ENCODE measurements at regions of chr17 and their contacts with region 1.

Region 1: GRCh38 chr17:60142872-60143499 is 6.8 kb upstream of the CA4 start:
- H3K4me3 ChIP-seq: no peak overlapping the region
- H3K27ac ChIP-seq: no peak overlapping the region
- H3K4me1 ChIP-seq: peaks cover 4% of the 10 kb centered on the region
- CTCF ChIP-seq: peak; percentile 92

Region 2: DNA sequence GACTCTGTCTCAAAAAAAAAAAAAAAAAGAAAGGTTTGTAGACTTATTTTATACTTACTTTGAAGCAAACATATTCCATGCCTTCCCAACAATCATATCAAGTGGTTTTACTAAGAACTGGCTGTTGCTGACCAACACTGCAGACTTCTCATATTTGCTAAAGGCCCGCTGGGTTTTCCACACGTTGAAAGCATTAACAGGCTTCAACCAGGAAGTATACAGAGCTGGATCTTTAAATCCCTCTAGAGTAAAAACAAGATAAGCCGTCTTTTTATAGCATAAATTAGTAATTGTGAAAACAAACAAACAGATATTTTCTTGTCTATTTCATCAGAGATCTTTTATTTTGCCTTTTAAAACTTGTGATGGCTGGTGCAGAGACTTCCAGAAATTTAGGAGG is 279.4 kb before region 1 on chr17:
- CTCF ChIA-PET with region 1: no interaction called
- POLR2A ChIA-PET with region 1: no interaction called
- H3K4me3 ChIP-seq: no peak overlapping the region
- H3K27ac ChIP-seq: no peak overlapping the region
- H3K4me1 ChIP-seq: no peaks in the 10 kb centered on the region
- CTCF ChIP-seq: no peak

Region 3: DNA sequence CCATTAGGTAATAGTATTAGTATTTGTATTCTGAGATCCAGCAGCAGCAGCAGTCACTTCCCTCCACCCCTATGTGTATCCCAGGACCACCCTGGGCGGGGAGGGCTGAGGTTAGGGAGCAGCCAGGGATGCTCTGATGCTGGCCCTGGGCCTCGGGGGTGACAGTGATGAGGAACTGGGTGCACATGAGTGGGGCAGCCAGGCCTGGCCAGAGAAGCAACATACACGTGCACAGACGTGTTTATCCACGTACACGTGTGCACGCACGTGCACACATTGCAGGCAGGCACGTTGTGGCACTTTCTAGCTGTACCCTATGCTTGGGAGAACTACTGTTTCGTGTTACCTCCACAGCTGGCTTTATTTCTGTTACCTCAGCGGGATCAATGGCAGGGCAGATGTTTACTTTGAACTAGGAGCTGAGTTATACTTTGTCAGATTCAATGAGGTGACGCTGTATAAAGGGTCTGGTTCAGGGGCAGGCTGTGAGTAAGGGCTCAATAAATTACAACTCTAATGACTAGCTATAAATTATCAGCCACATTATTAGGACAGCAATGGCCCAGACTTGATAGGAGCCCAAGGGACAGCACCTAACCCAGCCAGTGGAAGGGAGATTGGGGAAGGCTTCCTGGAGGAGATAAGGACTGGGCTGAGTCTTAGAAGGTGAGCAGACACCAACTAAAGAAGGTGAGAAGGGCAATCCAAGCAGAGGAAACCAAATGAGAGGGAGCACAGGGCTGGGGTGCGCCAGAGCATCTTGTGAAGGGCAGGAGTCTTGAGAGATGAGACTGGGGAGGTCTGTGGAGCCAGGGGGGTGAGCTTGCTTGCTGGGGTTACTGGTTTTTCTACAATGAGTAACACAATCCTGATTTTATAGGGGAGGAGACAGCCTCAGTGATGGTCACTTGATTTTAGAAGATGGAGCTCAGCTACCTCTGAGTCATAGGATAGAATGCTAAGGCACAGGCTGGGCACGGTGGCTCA is 15.6 kb before region 1 on chr17:
- CTCF ChIA-PET with region 1: interaction called, 16 read pairs
- POLR2A ChIA-PET with region 1: interaction called, 7 read pairs
- H3K4me3 ChIP-seq: no peak overlapping the region
- H3K27ac ChIP-seq: no peak overlapping the region
- H3K4me1 ChIP-seq: no peaks in the 10 kb centered on the region
- CTCF ChIP-seq: no peak

Region 4: DNA sequence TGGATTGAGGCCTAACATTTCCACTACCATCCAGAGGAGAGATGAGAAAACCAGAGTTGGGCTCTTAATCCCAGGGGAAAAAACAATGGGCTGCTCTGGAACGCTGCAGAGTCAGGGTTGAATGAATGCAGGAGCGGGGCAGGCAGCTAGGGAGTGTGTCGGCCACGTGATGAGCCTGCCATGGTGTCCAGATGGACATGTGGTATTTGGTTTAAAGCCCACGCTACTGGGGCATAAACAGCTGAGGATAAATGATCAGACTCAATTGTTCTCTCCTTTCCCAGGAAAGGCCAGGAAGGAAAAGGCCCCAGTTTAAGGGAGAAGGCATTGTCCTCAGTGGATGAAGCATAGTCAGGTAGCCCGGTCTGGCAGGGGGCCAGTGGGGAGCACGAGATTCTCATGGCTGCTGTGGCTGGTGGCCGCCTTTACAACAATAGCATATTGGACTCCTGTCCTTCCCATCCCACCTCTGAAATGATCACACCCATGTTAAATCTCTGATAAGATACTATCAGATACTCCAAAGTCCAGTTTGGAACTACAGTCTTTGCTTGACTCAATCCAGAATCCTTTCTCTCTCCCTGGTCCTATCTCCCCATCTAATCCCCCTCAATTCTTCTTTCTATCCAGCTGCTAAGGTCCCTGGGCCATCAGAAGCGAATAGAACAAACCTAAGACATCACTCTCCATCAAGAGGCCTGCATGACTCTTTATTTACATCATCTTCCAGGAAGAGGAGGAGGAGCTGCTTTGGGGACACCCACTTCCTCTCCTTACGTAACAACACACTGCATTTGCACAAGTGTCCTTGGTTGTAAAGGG is 27.1 kb after region 1 on chr17:
- CTCF ChIA-PET with region 1: interaction called, 10 read pairs
- POLR2A ChIA-PET with region 1: no interaction called
- H3K4me3 ChIP-seq: no peak overlapping the region
- H3K27ac ChIP-seq: peak overlapping the region; percentile 11; the same call in 1 of the 2 replicates
- H3K4me1 ChIP-seq: peaks cover 5% of the 10 kb centered on the region; the same call in 1 of the 2 replicates
- CTCF ChIP-seq: no peak